ENCODE measurements at regions of chr4 and their contacts with region 1.

Region 1: DNA sequence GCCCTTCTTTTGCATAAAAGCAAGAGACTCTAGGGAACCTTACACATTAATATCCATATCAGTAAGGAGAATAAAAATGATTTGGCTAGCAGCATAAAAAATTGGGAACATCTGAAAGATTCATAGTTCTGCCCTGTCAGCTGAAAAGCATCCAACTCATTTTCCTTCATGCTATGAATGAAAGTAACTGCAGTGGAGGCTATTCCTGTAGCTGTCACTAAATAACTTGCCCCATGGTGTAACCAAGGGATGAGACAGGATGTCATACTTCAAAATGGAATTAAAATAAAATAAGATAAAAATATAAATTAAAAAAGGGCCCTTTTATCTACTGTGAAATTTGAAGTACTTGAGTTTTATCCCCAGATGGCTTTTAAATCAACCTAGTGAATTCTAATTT is 878.8 kb downstream of the C4orf33 start:
- DNase-seq: no peak
- ATAC-seq: no peak
- H3K4me3 ChIP-seq: no peak overlapping the region
- H3K4me3 Mint-ChIP-seq: no peak overlapping the region
- H3K27ac ChIP-seq: no peak overlapping the region
- H3K27ac Mint-ChIP-seq: no peak overlapping the region
- H3K4me1 ChIP-seq: no peaks in the 10 kb centered on the region
- H3K4me1 Mint-ChIP-seq: no peaks in the 10 kb centered on the region
- H3K27me3 ChIP-seq: no peaks in the 10 kb centered on the region
- H3K27me3 Mint-ChIP-seq: no peaks in the 10 kb centered on the region
- CTCF ChIP-seq: no peak

Region 2: GRCh38 chr4:130008461-130008860 is 33.7 kb after region 1 on chr4:
- intact Hi-C with region 1: loop called (anchors 1 kb)
- DNase-seq: no peak
- ATAC-seq: no peak
- H3K4me3 ChIP-seq: no peak overlapping the region
- H3K4me3 Mint-ChIP-seq: no peak overlapping the region
- H3K27ac ChIP-seq: no peak overlapping the region
- H3K27ac Mint-ChIP-seq: no peak overlapping the region
- H3K4me1 ChIP-seq: no peaks in the 10 kb centered on the region
- H3K4me1 Mint-ChIP-seq: no peaks in the 10 kb centered on the region
- H3K27me3 ChIP-seq: no peaks in the 10 kb centered on the region
- H3K27me3 Mint-ChIP-seq: no peaks in the 10 kb centered on the region
- CTCF ChIP-seq: no peak

Measured in natural killer cell (primary cell).